Activated CD4-positive, alpha-beta T cell treated with anti-CD3 and anti-CD28 coated beads for 36 hours (primary cell): ENCODE measurements at regions of chr5 and their contacts with region 1.

Region 1: DNA sequence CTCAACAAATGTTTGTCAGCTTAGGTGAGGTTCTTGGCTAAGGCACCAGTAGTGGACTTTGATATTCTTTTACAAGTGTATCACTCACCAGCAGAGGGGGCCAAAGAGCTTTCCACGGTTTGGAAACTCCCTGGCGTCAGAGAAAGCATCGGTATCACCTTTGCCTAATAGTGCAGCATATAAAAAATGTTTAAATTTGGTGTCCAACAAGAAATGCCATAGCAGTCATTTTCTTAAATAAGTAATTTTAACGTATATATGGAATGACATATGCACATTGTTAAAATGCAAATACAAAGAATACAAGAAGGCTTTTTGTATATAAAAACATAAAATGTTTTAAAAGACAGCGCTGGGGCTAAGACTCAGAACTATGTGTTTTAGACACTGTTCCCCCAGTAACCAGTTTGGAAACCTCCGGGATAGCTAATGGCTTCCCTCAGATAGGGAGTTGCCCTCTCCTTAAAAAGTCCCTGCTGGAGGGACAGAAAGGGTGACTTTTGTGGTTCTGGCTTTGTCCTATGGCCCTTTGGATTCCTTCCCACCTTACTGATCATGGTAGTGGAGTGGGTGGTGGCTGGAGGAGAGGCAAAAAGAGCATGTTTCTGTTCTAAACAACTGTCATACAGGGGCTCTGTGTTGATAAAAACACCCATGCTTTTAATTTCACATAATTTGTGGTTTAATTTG is 124.6 kb downstream of the GPBP1 start:
- DNase-seq: peak; percentile 91
- ATAC-seq: peak; percentile 36
- H3K4me3 Mint-ChIP-seq: peak overlapping the region; percentile 56
- H3K27ac Mint-ChIP-seq: peak overlapping the region; percentile 62
- H3K4me1 Mint-ChIP-seq: peaks cover 40% of the 10 kb centered on the region
- H3K27me3 Mint-ChIP-seq: peaks cover 2% of the 10 kb centered on the region

Region 2: GRCh38 chr5:56601641-56602071 is 696.8 kb before region 1 on chr5:
- CTCF ChIA-PET with region 1: no interaction called
- POLR2A ChIA-PET with region 1: no interaction called
- intact Hi-C with region 1: no loop called
- DNase-seq: no peak
- ATAC-seq: no peak
- H3K4me3 Mint-ChIP-seq: no peak overlapping the region
- H3K27ac Mint-ChIP-seq: no peak overlapping the region
- H3K4me1 Mint-ChIP-seq: peaks cover 21% of the 10 kb centered on the region
- H3K27me3 Mint-ChIP-seq: no peaks in the 10 kb centered on the region

Region 3: DNA sequence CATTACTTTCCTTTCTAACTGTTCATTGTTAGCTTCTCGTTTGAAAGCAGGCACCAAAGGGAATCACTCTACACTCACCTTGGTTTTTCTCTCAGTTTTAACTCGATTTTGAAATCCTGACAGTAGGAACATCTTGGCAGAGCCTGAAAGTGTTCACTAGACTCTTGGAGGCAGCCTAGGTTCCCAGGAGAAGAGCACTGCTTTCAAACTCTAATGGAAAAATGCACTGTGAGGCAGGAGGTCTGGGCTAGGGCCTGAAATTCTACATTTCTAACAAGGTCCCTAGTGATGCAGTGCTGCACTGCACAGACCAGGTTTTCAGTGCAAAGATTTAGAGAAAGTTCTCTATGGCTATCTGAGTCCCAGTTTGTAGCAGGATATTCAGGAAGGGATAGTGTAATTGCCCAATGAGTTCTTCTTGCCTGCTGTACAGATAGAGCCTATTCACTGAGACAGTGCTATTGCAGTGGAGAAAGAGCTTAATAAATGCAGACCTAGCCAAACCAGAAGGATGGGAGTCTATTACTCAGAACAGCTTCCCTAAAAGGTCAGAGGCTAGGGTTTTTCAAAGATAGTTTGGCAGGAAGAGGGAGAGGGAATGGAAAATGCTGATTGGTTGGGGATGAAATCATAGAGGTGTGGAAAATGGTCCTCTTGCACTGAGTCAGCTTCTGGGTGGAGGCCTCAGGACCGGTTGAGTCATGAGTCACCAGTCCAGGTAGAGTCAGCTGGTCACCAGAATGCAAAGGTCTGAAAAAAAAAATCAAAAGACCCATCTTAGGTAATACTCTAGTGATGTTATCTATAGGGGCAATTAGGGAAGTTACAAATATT is 29.3 kb after region 1 on chr5:
- CTCF ChIA-PET with region 1: interaction called, 6 read pairs
- POLR2A ChIA-PET with region 1: interaction called, 3 read pairs
- intact Hi-C with region 1: loop called in 1 of 2 experiments (anchors 1 kb)
- DNase-seq: peak; percentile 9
- ATAC-seq: peak; percentile 58
- H3K4me3 Mint-ChIP-seq: no peak overlapping the region
- H3K27ac Mint-ChIP-seq: no peak overlapping the region
- H3K4me1 Mint-ChIP-seq: peaks cover 24% of the 10 kb centered on the region
- H3K27me3 Mint-ChIP-seq: no peaks in the 10 kb centered on the region

Region 4: GRCh38 chr5:57494104-57495098 is 196.0 kb after region 1 on chr5:
- CTCF ChIA-PET with region 1: interaction called, 6 read pairs
- POLR2A ChIA-PET with region 1: no interaction called
- intact Hi-C with region 1: loop called (anchors 1 kb)
- DNase-seq: peak; percentile 76
- ATAC-seq: peak; percentile 79
- H3K4me3 Mint-ChIP-seq: no peak overlapping the region
- H3K27ac Mint-ChIP-seq: peak overlapping the region; percentile 64
- H3K4me1 Mint-ChIP-seq: peaks cover 36% of the 10 kb centered on the region
- H3K27me3 Mint-ChIP-seq: peaks cover 2% of the 10 kb centered on the region

Region 5: DNA sequence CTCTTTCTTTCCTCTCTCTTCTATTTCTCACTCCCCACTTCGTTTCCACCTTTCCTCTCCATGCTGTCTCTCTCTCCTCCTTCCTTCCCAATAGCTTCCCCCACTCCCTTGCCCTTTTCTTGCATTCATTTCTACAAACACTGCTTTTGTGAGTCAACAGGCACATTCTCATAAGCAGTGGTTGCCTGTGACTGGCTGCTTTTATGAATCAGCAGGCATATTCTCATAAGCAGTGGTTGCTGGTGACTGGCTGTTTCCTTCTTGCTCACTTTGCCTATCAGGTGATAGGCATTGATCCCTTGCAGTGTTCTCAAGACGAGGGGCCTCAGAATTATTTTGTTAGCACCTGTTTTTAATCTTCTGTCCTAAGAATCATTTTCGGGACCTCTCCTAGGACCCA is 300.3 kb after region 1 on chr5:
- CTCF ChIA-PET with region 1: interaction called, 3 read pairs
- POLR2A ChIA-PET with region 1: no interaction called
- intact Hi-C with region 1: loop called in 1 of 2 experiments (anchors 2 kb)
- DNase-seq: peak; percentile 67
- ATAC-seq: peak; percentile 95
- H3K4me3 Mint-ChIP-seq: no peak overlapping the region
- H3K27ac Mint-ChIP-seq: no peak overlapping the region
- H3K4me1 Mint-ChIP-seq: peaks cover 21% of the 10 kb centered on the region
- H3K27me3 Mint-ChIP-seq: peaks cover 12% of the 10 kb centered on the region

Region 6: DNA sequence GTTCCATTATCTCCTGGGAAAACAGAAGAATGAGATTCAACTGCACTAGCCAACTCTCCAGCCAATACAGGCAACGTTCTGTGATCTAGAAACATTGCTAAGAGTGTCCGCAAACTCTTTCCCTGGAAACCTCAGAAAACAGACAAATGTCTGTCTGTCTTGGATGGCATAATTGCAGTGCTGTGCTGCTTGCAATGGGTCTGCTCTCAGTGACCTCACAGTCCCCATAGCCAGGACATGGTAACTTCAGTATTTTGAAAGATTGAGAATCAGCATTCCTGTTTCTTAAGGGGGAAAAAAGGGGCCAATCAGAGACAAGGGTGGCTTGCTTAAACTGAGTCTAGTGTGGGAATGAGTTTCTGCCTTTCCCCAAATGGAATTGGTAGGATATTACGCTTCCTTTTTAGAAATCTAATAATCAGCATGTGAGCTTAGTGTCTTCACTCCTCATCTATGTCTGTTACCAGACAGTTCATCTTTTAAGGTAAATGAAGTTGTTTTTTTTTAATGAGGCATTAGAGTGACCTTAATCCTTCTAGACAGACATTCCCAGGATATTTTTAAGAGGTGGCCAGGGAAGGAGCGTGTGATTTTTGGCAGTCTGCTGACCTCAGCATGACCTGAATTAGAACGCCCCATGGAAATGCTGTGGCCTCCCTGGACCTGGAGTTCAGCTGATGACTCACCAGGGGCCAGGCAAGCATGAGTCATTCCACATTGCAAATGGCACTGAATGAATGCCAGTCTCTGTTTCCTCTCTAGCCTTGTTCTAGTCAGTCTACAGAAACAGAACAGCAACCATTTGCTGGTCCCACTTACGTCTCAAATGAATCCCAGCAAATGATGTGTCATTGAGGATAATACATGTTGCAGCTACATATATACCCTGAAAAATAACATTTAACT is 394.4 kb after region 1 on chr5:
- CTCF ChIA-PET with region 1: no interaction called
- POLR2A ChIA-PET with region 1: no interaction called
- intact Hi-C with region 1: loop called in 1 of 2 experiments (anchors 5 kb)
- DNase-seq: peak; percentile 58
- ATAC-seq: peak; percentile 78
- H3K4me3 Mint-ChIP-seq: no peak overlapping the region
- H3K27ac Mint-ChIP-seq: no peak overlapping the region
- H3K4me1 Mint-ChIP-seq: peaks cover 4% of the 10 kb centered on the region
- H3K27me3 Mint-ChIP-seq: no peaks in the 10 kb centered on the region